Aorta (tissue), 5 donors: ENCODE measurements at regions of chr2 and their contacts with region 1.

Region 1: GRCh38 chr2:133886735-133887660 is 318.7 kb upstream of the NCKAP5 start:
- DNase-seq: peak; percentile 68 to 82
- ATAC-seq: peak; percentile 68
- H3K4me3 ChIP-seq: no peak overlapping the region
- H3K27ac ChIP-seq: no peak overlapping the region
- H3K4me1 ChIP-seq: no peaks in the 10 kb centered on the region
- H3K27me3 ChIP-seq: no peaks in the 10 kb centered on the region

Region 2: GRCh38 chr2:133765658-133766057 is 121.3 kb before region 1 on chr2:
- intact Hi-C with region 1: no loop called
- DNase-seq: no peak
- ATAC-seq: peak; percentile 69
- H3K4me3 ChIP-seq: no peak overlapping the region
- H3K27ac ChIP-seq: no peak overlapping the region
- H3K4me1 ChIP-seq: no peaks in the 10 kb centered on the region
- H3K27me3 ChIP-seq: no peaks in the 10 kb centered on the region

Region 3: GRCh38 chr2:134118279-134119116 is 231.5 kb after region 1 on chr2:
- intact Hi-C with region 1: loop called in 1 of 2 experiments (anchors 10 kb)
- DNase-seq: peak; percentile 92 to 94
- ATAC-seq: peak; percentile 82
- H3K4me3 ChIP-seq: no peak overlapping the region
- H3K27ac ChIP-seq: peak overlapping the region in 1 of 2 donors; percentile 69
- H3K4me1 ChIP-seq: peaks cover 3% of the 10 kb centered on the region in 2 donors
- H3K27me3 ChIP-seq: no peaks in the 10 kb centered on the region

Region 4: GRCh38 chr2:134207564-134208209 is 320.7 kb after region 1 on chr2:
- intact Hi-C with region 1: loop called in 1 of 2 experiments (anchors 10 kb)
- DNase-seq: peak; percentile 69 to 86
- ATAC-seq: no peak
- H3K4me3 ChIP-seq: no peak overlapping the region
- H3K27ac ChIP-seq: no peak overlapping the region
- H3K4me1 ChIP-seq: no peaks in the 10 kb centered on the region
- H3K27me3 ChIP-seq: no peaks in the 10 kb centered on the region

Region 5: GRCh38 chr2:134245340-134245984 is 358.5 kb after region 1 on chr2:
- intact Hi-C with region 1: loop called in 1 of 2 experiments (anchors 10 kb)
- DNase-seq: peak; percentile 87 to 88
- ATAC-seq: peak; percentile 81
- H3K4me3 ChIP-seq: no peak overlapping the region
- H3K27ac ChIP-seq: no peak overlapping the region
- H3K4me1 ChIP-seq: no peaks in the 10 kb centered on the region
- H3K27me3 ChIP-seq: no peaks in the 10 kb centered on the region

Region 6: GRCh38 chr2:134411828-134412638 is 525.0 kb after region 1 on chr2:
- intact Hi-C with region 1: loop called in 1 of 2 experiments (anchors 5 kb)
- DNase-seq: peak; percentile 76 to 80
- ATAC-seq: peak; percentile 95
- H3K4me3 ChIP-seq: no peak overlapping the region
- H3K27ac ChIP-seq: no peak overlapping the region
- H3K4me1 ChIP-seq: no peaks in the 10 kb centered on the region
- H3K27me3 ChIP-seq: no peaks in the 10 kb centered on the region

Region 7: GRCh38 chr2:134897932-134898331 is 1010.9 kb after region 1 on chr2:
- intact Hi-C with region 1: loop called in 1 of 2 experiments (anchors 10 kb)
- DNase-seq: no peak
- ATAC-seq: no peak
- H3K4me3 ChIP-seq: no peak overlapping the region
- H3K27ac ChIP-seq: no peak overlapping the region
- H3K4me1 ChIP-seq: no peaks in the 10 kb centered on the region
- H3K27me3 ChIP-seq: no peaks in the 10 kb centered on the region